ENCODE measurements at regions of chr18 and their contacts with region 1.

Region 1: GRCh38 chr18:55322178-55322735 is 265.7 kb downstream of the TCF4 start:
- DNase-seq: peak; percentile 95
- H3K4me3 ChIP-seq: peak overlapping the region; percentile 60
- H3K27ac ChIP-seq: peak overlapping the region; percentile 89
- H3K4me1 ChIP-seq: peaks cover 42% of the 10 kb centered on the region
- H3K27me3 ChIP-seq: no peaks in the 10 kb centered on the region
- CTCF ChIP-seq: no peak

Region 2: DNA sequence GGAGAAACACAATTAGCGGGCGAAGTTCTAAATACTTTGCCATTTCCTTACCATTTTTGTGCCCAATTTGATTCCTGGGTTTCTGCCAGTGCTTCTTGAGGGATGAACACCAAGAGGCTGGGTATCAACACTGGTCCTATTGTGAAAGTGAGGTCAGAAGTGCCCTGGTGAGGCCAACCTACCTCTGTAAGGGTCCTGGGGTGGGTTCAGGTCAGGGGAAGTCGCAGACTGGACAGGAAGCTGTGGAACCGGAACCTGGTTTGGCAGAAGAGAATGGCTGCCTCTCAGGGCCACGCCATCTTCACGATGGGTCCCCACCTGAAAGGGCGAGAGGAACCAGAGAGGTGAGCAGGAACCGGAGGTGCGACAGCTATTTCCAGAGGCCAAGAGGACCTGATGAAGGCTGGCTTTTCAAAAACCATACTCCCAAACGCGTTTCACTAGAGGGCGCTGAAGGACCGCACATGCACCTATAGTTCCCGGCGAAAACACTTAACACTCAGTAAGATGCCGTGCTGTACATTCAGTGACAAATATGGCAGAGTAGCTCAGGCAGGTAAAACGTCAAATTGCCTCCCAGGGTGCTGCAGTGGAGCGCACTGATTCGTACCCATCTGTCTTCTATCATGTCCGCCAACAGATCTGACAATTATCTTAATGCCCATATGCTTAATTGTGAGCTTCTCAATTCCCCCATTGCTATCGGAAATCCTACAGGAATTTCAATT is 87.7 kb before region 1 on chr18:
- CTCF ChIA-PET with region 1: interaction called, 3 read pairs
- POLR2A ChIA-PET with region 1: no interaction called
- intact Hi-C with region 1: loop called (anchors 5 kb)
- DNase-seq: peak; percentile 91
- H3K4me3 ChIP-seq: peak overlapping the region; percentile 3
- H3K27ac ChIP-seq: peak overlapping the region; percentile 19
- H3K4me1 ChIP-seq: peaks cover 32% of the 10 kb centered on the region
- H3K27me3 ChIP-seq: no peaks in the 10 kb centered on the region
- CTCF ChIP-seq: peak; percentile 83

Region 3: GRCh38 chr18:55351980-55352714 is 29.9 kb after region 1 on chr18:
- CTCF ChIA-PET with region 1: no interaction called
- POLR2A ChIA-PET with region 1: interaction called, 22 read pairs
- intact Hi-C with region 1: no loop called
- DNase-seq: peak; percentile 87
- H3K4me3 ChIP-seq: peak overlapping the region; percentile 4
- H3K27ac ChIP-seq: peak overlapping the region; percentile 78
- H3K4me1 ChIP-seq: peaks cover 98% of the 10 kb centered on the region
- H3K27me3 ChIP-seq: no peaks in the 10 kb centered on the region
- CTCF ChIP-seq: no peak

Region 4: DNA sequence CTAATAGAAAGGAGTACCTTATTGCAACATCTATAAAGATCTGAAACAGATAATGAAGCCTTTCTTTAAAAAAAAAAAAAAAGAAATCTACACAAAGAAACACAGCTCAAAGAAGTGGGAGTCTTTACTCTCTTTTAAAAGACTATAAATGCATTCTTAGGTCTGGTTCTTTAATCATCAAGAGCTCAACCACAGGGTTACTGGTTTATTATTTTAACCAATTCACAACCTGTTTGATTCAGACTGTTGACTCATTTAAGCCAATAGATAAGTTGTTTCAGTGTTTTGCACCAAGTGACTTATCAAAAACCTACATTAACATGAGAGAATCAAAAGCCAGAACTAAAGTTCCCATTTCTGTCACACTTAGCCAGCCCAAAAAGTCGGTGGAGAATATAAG is 172.6 kb after region 1 on chr18:
- CTCF ChIA-PET with region 1: no interaction called
- POLR2A ChIA-PET with region 1: no interaction called
- intact Hi-C with region 1: no loop called
- DNase-seq: no peak
- H3K4me3 ChIP-seq: no peak overlapping the region
- H3K27ac ChIP-seq: no peak overlapping the region
- H3K4me1 ChIP-seq: peaks cover 50% of the 10 kb centered on the region
- H3K27me3 ChIP-seq: no peaks in the 10 kb centered on the region
- CTCF ChIP-seq: no peak

Region 5: DNA sequence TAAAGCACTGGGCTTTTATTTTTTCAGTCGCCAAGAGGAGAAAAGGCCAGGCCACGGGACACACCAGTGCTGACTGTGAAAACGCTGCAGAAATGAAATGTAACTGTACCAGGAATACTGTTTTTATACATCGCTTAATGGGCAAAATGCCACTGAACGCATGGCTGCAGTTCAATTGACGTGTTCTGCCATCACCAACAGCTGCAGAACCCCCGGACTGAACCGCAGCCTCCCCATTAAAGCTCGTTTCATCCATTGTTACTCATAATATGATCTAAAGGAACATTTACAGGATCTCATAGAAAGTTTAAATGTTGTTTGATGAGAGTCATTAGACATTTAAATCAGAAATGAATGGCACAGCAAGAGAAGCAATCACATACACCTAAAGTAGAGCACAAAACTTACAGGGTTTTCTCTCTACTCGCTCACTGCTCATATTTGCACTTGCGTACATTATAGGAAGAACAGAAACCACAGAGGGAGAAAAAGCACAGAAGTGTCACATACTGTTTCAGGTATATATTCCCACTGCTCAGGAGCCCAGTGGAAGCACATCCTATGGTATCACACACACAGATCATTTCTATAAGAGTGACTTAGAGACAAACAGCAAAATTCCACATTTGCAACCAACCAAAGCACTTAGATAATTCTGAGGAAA is 230.4 kb after region 1 on chr18:
- CTCF ChIA-PET with region 1: no interaction called
- POLR2A ChIA-PET with region 1: no interaction called
- intact Hi-C with region 1: no loop called
- DNase-seq: peak; percentile 62
- H3K4me3 ChIP-seq: no peak overlapping the region
- H3K27ac ChIP-seq: no peak overlapping the region
- H3K4me1 ChIP-seq: peaks cover 24% of the 10 kb centered on the region
- H3K27me3 ChIP-seq: no peaks in the 10 kb centered on the region
- CTCF ChIP-seq: no peak